CD8-positive, alpha-beta T cell (primary cell): ENCODE measurements at regions of chr2 and their contacts with region 1.

Region 1: GRCh38 chr2:240021488-240022104 is 3.5 kb downstream of the NDUFA10 start:
- DNase-seq: peak; percentile 15 to 72 (median 64)
- ATAC-seq: peak; percentile 35
- H3K4me3 ChIP-seq: no peak overlapping the region
- H3K4me3 Mint-ChIP-seq: no peak overlapping the region
- H3K27ac ChIP-seq: no peak overlapping the region
- H3K27ac Mint-ChIP-seq: no peak overlapping the region
- H3K4me1 ChIP-seq: peaks cover 14% of the 10 kb centered on the region
- H3K4me1 Mint-ChIP-seq: peaks cover 29% of the 10 kb centered on the region
- H3K27me3 ChIP-seq: no peaks in the 10 kb centered on the region
- H3K27me3 Mint-ChIP-seq: no peaks in the 10 kb centered on the region
- CTCF ChIP-seq: peak; percentile 82

Region 2: DNA sequence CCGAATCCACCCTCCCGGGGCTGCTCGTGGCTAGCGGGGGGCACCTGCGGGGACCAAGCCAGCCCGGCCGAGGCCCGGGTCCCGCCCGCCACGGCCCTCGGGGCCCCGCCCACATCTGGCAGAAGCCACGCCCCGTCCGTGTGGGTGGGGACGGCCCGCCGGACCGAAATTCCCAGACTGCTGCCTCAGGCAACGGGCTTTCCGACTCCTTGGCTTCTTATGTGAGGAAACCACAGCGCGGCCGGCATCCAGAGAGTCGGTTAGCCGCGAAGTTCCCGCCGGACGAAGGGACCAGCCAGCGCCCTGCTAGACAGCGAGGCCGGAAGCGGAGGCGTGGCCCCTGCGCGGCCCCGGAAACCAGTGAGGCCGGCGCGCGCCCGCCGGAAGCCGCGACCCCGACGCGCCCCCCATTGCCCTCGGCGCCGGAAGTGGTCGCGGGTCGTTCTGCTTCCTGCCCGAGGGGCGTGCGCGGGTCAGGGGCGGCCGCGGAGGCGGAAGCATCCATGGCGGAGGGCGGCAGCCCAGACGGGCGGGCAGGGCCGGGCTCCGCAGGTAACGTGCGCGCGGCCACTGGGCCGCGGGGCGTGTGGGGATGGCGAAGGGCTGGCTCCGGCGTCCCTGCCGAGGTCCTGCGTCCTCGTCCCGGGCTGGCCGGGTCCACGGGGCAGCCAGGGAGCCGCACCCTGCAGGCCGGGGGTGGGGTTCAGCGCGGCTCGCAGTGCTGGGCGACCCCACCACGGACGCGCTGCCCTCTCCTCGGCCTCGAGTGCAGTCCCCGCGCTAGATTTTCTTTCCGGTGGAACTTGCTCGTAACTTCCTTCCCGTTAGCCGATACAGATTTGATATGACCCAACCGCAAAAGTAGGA is 1594.8 kb before region 1 on chr2 and contains the start of gene ASB1:
- CTCF ChIA-PET with region 1: no interaction called
- POLR2A ChIA-PET with region 1: no interaction called
- intact Hi-C with region 1: loop called in 1 of 2 experiments (anchors 5 kb)
- DNase-seq: peak; percentile 62 to 94 (median 83)
- ATAC-seq: peak; percentile 78
- H3K4me3 ChIP-seq: peak within 1 kb of the TSS; percentile 66 to 79
- H3K4me3 Mint-ChIP-seq: peak within 1 kb of the TSS; percentile 92
- H3K27ac ChIP-seq: peak within 1 kb of the TSS; percentile 78 to 87
- H3K27ac Mint-ChIP-seq: peak within 1 kb of the TSS; percentile 97
- H3K4me1 ChIP-seq: peaks cover 37% of the 10 kb centered on the region
- H3K4me1 Mint-ChIP-seq: peaks cover 49% of the 10 kb centered on the region
- H3K27me3 ChIP-seq: no peaks in the 10 kb centered on the region
- H3K27me3 Mint-ChIP-seq: no peaks in the 10 kb centered on the region
- CTCF ChIP-seq: no peak
- total RNA-seq, gene ASB1: 16.3 to 25.3 TPM

Region 3: DNA sequence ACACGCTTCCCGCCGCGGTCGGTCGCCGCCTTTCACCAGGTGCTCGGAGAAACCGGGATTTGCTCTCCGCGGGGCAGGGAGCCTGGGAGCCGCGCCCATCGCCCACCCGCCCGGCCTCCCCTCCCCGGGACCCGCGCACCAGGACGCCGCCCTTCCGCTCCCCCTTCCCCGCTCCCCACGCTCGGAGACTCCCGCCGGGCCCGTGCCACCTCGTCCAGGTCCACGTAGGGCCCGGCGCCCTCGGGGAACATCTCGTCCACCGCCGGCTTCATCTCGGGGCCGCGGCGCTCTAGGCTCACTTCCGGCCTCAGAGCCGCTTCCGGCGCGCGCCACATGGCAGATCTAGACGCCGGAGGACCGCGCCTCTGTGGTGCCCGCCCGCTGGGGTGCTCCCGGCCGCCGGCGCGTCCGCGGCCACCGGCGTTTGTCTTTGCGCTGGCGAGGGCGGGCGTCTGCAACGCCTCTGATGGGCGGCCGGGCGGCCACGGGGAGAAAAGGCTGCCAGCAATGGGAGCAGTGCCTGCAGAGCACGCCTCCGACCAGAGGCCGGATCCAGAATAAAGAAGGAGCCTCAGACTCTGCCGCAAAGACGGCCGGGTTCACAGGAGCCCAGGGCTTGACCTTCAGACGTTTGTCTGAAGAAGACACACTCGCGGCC is 114.5 kb after region 1 on chr2 and contains the start of gene COPS9:
- CTCF ChIA-PET with region 1: interaction called, 3 read pairs
- POLR2A ChIA-PET with region 1: no interaction called
- intact Hi-C with region 1: loop called (anchors 1 kb)
- DNase-seq: peak; percentile 78 to 92 (median 86)
- ATAC-seq: peak; percentile 95
- H3K4me3 ChIP-seq: peak within 1 kb of the TSS; percentile 92 to 93
- H3K4me3 Mint-ChIP-seq: peak within 1 kb of the TSS; percentile 92
- H3K27ac ChIP-seq: peak within 1 kb of the TSS; percentile 61 to 76
- H3K27ac Mint-ChIP-seq: peak within 1 kb of the TSS; percentile 89
- H3K4me1 ChIP-seq: peaks cover 16% of the 10 kb centered on the region
- H3K4me1 Mint-ChIP-seq: peaks cover 27% of the 10 kb centered on the region
- H3K27me3 ChIP-seq: no peaks in the 10 kb centered on the region
- H3K27me3 Mint-ChIP-seq: no peaks in the 10 kb centered on the region
- CTCF ChIP-seq: no peak
- total RNA-seq, gene COPS9: 56.4 to 59.6 TPM

Region 4: GRCh38 chr2:240586198-240586918 is 564.8 kb after region 1 on chr2 and contains the start of gene CAPN10:
- CTCF ChIA-PET with region 1: no interaction called
- POLR2A ChIA-PET with region 1: no interaction called
- intact Hi-C with region 1: loop called in 1 of 2 experiments (anchors 10 kb)
- DNase-seq: peak; percentile 92 to 98 (median 97)
- ATAC-seq: peak; percentile 80
- H3K4me3 ChIP-seq: peak within 1 kb of the TSS; percentile 82 to 95
- H3K4me3 Mint-ChIP-seq: peak within 1 kb of the TSS; percentile 88
- H3K27ac ChIP-seq: peak within 1 kb of the TSS; percentile 86 to 90
- H3K27ac Mint-ChIP-seq: peak within 1 kb of the TSS; percentile 94
- H3K4me1 ChIP-seq: peaks cover 37% of the 10 kb centered on the region
- H3K4me1 Mint-ChIP-seq: peaks cover 57% of the 10 kb centered on the region
- H3K27me3 ChIP-seq: no peaks in the 10 kb centered on the region
- H3K27me3 Mint-ChIP-seq: no peaks in the 10 kb centered on the region
- CTCF ChIP-seq: no peak
- total RNA-seq, gene CAPN10: 65.9 to 68.9 TPM